Sciatic nerve (tissue), 2 donors: ENCODE measurements at regions of chr19 and their contacts with region 1.

Region 1: GRCh38 chr19:1605236-1606137 is at the start of gene UQCR11:
- DNase-seq: peak; percentile 97
- ATAC-seq: peak; percentile 97
- total RNA-seq, gene UQCR11: 136 TPM

Region 2: DNA sequence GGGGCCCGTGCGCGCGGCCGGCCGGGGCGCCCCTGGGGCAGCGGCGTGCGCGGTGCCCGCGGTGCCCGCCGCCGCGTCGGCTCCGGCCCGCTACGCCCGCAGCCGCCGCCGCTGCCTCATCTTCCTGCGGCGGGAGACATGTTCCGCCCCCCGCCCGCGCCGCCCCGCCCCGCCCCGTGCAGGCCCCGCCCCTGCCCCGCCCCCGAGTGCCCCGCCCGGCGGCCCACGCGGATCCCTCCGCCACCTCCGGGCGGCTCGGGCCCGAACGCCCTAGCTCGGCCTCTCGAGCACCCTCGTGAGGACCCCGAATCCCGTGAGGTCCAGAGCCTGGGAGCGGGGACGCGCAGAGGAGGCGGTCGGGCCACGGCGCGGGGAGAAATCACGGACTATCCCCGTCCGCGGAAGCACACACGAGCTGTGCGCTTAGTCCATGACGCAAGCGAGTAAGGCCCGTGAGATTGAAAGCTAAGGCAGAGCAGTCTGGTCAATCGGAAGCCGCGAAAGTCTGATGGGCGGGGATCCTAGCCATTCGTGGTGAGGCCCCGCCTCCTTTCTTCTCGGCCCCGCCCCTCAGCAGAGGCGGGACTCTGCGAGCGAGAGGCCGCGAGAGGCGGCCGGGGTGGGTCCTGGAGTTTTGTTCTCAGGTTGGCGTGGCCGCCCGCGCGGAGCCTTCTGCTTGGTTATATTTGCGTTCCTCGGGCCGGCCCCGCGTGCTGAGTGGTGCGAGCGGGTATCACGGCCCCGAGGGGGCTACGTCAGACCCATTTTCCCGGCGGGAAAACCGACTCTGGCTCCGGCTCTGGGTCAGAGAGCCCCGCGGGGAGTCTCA is 47.2 kb after region 1 on chr19 and contains the start of gene TCF3:
- intact Hi-C with region 1: loop called (anchors 5 kb)
- DNase-seq: peak; percentile 99
- ATAC-seq: peak; percentile 99
- total RNA-seq, gene TCF3: 48.7 TPM